Activated CD4-positive, alpha-beta T cell treated with anti-CD3 and anti-CD28 coated beads for 36 hours (primary cell): ENCODE measurements at regions of chr5 and their contacts with region 1.

Region 1: DNA sequence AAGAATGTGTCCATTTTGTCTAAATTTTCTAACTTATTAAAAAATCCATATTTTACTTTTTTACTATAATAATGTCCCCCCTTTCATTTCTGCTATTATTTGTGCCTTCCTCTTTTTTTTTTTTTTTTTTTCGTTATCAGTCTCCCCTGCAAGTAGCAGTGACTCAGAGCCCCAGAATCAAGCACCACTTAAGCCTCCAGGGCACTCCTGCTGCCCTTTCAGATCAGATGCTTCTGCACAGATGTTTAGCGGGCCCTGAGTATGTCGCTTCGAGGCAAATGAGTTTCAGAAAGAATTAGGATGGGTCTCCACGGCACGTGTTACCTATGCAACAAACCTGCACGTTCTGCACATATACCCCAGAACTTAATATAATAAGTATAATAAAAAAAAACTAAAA is 11.7 kb downstream of the MED7 start:
- DNase-seq: no peak
- ATAC-seq: no peak
- H3K4me3 Mint-ChIP-seq: no peak overlapping the region
- H3K27ac Mint-ChIP-seq: no peak overlapping the region
- H3K4me1 Mint-ChIP-seq: peaks cover 26% of the 10 kb centered on the region
- H3K27me3 Mint-ChIP-seq: no peaks in the 10 kb centered on the region

Region 2: DNA sequence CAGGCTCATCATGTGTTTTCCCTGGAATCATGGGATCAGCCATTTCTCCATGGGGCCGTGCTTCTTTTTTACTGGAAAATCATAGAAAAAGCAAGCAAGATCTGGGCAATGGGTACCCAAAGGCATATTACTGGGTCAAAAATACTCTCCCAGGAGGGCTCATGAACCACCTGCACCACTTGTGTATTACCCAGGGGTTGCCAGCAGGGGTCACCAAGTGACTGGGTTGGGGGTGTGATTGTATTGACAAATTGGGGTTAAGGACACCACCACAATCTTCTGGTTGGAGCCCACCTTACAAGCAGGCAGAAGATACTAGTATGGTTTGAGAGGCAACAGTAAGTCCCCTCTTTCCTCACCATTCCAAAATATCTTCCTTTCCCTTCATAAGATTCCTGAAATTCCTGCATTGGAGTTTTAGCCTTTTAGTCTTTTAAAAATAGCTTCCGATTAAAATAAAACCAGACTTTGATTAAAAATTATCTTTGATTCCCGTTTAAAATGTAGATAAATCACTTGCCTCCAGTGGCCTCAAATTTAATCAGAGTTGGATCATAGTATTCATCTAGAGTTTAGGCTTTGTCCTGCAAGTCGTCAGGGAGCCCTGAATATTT is 1514.0 kb before region 1 on chr5:
- CTCF ChIA-PET with region 1: interaction called, 3 read pairs
- POLR2A ChIA-PET with region 1: no interaction called
- intact Hi-C with region 1: loop called (anchors 2 to 5 kb)
- DNase-seq: peak; percentile 72
- ATAC-seq: peak; percentile 39
- H3K4me3 Mint-ChIP-seq: no peak overlapping the region
- H3K27ac Mint-ChIP-seq: no peak overlapping the region
- H3K4me1 Mint-ChIP-seq: no peaks in the 10 kb centered on the region
- H3K27me3 Mint-ChIP-seq: peaks cover 16% of the 10 kb centered on the region

Region 3: GRCh38 chr5:156755421-156756087 is 375.4 kb before region 1 on chr5:
- CTCF ChIA-PET with region 1: no interaction called
- POLR2A ChIA-PET with region 1: no interaction called
- intact Hi-C with region 1: loop called in 1 of 2 experiments (anchors 10 kb)
- DNase-seq: no peak
- ATAC-seq: no peak
- H3K4me3 Mint-ChIP-seq: no peak overlapping the region
- H3K27ac Mint-ChIP-seq: no peak overlapping the region
- H3K4me1 Mint-ChIP-seq: peaks cover 7% of the 10 kb centered on the region
- H3K27me3 Mint-ChIP-seq: peaks cover 3% of the 10 kb centered on the region

Region 4: DNA sequence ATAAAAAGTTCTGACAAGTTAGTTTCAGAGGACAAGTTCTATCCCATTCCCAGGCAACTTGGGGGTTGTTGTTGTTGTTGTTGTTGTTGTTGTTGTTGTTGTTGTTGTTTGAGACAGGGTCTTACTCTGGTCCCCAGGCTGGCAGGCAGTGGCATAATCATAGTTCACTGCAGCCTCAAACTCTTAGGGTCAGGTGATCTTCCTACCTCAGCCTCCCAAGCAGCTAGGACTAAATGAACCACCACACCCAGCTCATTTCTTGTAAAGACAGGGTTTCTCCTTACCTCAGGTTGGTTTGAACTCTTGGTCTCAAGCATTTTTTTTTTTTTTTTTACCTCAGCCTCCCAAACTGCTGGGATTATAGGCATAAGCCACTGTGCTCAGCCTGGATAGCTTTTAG is 265.5 kb before region 1 on chr5:
- CTCF ChIA-PET with region 1: no interaction called
- POLR2A ChIA-PET with region 1: no interaction called
- intact Hi-C with region 1: no loop called
- DNase-seq: no peak
- ATAC-seq: no peak
- H3K4me3 Mint-ChIP-seq: no peak overlapping the region
- H3K27ac Mint-ChIP-seq: no peak overlapping the region
- H3K4me1 Mint-ChIP-seq: peaks cover 3% of the 10 kb centered on the region
- H3K27me3 Mint-ChIP-seq: no peaks in the 10 kb centered on the region

Region 5: GRCh38 chr5:156934450-156935211 is 196.3 kb before region 1 on chr5:
- CTCF ChIA-PET with region 1: interaction called, 13 read pairs
- POLR2A ChIA-PET with region 1: no interaction called
- intact Hi-C with region 1: loop called in 1 of 2 experiments (anchors 2 kb)
- DNase-seq: peak; percentile 80
- ATAC-seq: peak; percentile 89
- H3K4me3 Mint-ChIP-seq: no peak overlapping the region
- H3K27ac Mint-ChIP-seq: peak overlapping the region; percentile 82
- H3K4me1 Mint-ChIP-seq: peaks cover 42% of the 10 kb centered on the region
- H3K27me3 Mint-ChIP-seq: peaks cover 5% of the 10 kb centered on the region

Region 6: DNA sequence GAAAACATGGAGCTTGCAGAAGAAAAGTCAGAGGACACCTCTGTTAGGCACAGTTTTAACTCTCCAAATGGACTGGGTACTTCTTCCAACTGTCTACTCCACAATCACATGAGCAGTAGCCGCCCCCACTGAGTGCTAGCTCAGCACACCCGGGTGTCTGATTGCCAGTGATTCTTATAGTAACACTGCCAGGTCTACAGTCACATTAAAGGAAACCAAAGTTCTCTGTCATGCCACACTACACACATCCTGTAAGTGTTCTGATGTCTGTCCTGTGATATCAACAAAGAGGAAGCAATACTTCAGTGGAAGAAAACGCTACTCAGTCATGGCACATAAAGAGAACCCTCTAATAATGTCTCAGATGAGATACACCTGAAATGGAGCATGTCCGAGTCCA is 21.9 kb before region 1 on chr5 and contains the start of gene HAVCR2:
- CTCF ChIA-PET with region 1: interaction called, 18 read pairs
- POLR2A ChIA-PET with region 1: interaction called, 3 read pairs
- intact Hi-C with region 1: no loop called
- DNase-seq: peak; percentile 82
- ATAC-seq: peak; percentile 96
- H3K4me3 Mint-ChIP-seq: peak within 1 kb of the TSS; percentile 65
- H3K27ac Mint-ChIP-seq: peak within 1 kb of the TSS; percentile 97
- H3K4me1 Mint-ChIP-seq: peaks cover 45% of the 10 kb centered on the region
- H3K27me3 Mint-ChIP-seq: no peaks in the 10 kb centered on the region
- total RNA-seq, gene HAVCR2: 12.6 to 15.9 TPM

Region 7: DNA sequence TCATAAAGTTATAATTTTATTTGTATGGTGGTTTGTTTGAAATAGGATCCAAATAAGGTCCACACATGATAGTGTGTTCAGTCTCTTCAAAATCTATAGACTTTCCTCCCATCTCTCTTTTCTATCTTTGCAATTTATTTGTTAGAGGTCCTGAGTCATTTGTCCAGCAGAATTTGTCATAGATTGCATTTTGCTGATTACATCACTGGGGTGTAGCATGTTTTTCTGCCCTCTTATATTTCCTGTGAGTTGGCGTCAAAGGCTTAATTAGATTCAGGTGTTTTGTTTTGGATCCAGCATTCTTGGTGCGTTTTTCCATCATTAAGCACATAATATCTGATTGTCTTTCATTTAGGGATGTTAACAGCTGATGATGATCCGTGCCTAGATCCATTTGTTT is 150.0 kb after region 1 on chr5:
- CTCF ChIA-PET with region 1: no interaction called
- POLR2A ChIA-PET with region 1: no interaction called
- intact Hi-C with region 1: no loop called
- DNase-seq: no peak
- ATAC-seq: peak; percentile 33
- H3K4me3 Mint-ChIP-seq: peak overlapping the region; percentile 2
- H3K27ac Mint-ChIP-seq: peak overlapping the region; percentile 86
- H3K4me1 Mint-ChIP-seq: peaks cover 94% of the 10 kb centered on the region
- H3K27me3 Mint-ChIP-seq: no peaks in the 10 kb centered on the region

Region 8: GRCh38 chr5:157772127-157772526 is 641.2 kb after region 1 on chr5:
- CTCF ChIA-PET with region 1: no interaction called
- POLR2A ChIA-PET with region 1: no interaction called
- intact Hi-C with region 1: no loop called
- DNase-seq: peak; percentile 39
- ATAC-seq: peak; percentile 83
- H3K4me3 Mint-ChIP-seq: no peak overlapping the region
- H3K27ac Mint-ChIP-seq: no peak overlapping the region
- H3K4me1 Mint-ChIP-seq: peaks cover 5% of the 10 kb centered on the region
- H3K27me3 Mint-ChIP-seq: peaks cover 4% of the 10 kb centered on the region